Body of pancreas (tissue), 4 donors: ENCODE measurements at regions of chr18 and their contacts with region 1.

Region 1: GRCh38 chr18:45980229-45980628 is 13.1 kb upstream of the EPG5 start:
- DNase-seq: no peak
- ATAC-seq: no peak
- H3K4me3 ChIP-seq: no peak overlapping the region
- H3K27ac ChIP-seq: no peak overlapping the region
- H3K4me1 ChIP-seq: peaks cover 14% of the 10 kb centered on the region
- H3K27me3 ChIP-seq: no peaks in the 10 kb centered on the region
- CTCF ChIP-seq: no peak
- POLR2A ChIP-seq: no peak

Region 2: GRCh38 chr18:45596036-45596435 is 384.2 kb before region 1 on chr18:
- intact Hi-C with region 1: no loop called
- DNase-seq: no peak
- ATAC-seq: no peak
- H3K4me3 ChIP-seq: no peak overlapping the region
- H3K27ac ChIP-seq: no peak overlapping the region
- H3K4me1 ChIP-seq: no peaks in the 10 kb centered on the region
- H3K27me3 ChIP-seq: no peaks in the 10 kb centered on the region
- CTCF ChIP-seq: no peak
- POLR2A ChIP-seq: no peak

Region 3: GRCh38 chr18:46067431-46068007 is 87.3 kb after region 1 on chr18:
- intact Hi-C with region 1: loop called (anchors 10 kb)
- DNase-seq: peak; percentile 18 to 64 (median 48)
- ATAC-seq: peak; percentile 81
- H3K4me3 ChIP-seq: no peak overlapping the region
- H3K27ac ChIP-seq: peak overlapping the region in 1 of 4 donors; percentile 18
- H3K4me1 ChIP-seq: peaks cover 18% of the 10 kb centered on the region
- H3K27me3 ChIP-seq: no peaks in the 10 kb centered on the region
- CTCF ChIP-seq: no peak
- POLR2A ChIP-seq: no peak